ENCODE measurements at regions of chr9 and their contacts with region 1.

Region 1: GRCh38 chr9:73200694-73201452 is 49.2 kb downstream of the ANXA1 start:
- DNase-seq: peak in 1 of 2 experiments; percentile 44
- ATAC-seq: peak; percentile 70 to 84; a peak in 5 of 6 replicates
- H3K4me3 ChIP-seq: no peak overlapping the region
- H3K27ac ChIP-seq: no peak overlapping the region
- H3K4me1 ChIP-seq: peaks cover 22% of the 10 kb centered on the region; the same call in 2 of the 3 replicates
- CTCF ChIP-seq: peak; percentile 83
- EP300 ChIP-seq: no peak
- POLR2A ChIP-seq: no peak
- RAD21 ChIP-seq: peak; percentile 80 to 86

Region 2: DNA sequence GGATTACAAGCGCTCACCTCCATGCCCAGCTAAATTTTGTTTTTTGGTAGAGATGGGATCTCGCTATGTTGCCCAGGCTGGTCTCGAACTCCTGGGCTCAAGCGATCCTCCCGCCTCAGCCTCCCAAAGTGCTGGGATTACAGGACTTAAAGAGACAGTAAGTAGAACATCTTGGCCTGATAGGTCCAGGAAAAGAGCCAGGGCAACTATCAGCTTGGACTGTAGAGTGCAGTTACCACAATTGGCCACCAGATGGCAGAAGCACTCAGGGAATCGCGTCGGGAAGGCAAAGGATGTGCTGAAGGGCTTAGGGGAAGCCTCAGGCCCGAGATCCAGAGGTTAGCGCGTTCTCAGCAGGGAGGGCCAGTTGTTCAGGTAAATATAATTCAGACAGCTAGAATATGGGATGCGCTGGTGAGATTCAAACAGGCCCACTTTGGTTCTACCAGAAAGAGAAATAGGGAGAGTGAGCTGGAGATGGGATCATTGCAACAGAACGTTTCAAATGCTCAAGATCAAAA is 1161.9 kb before region 1 on chr9:
- CTCF ChIA-PET with region 1: interaction called, 13 read pairs
- POLR2A ChIA-PET with region 1: no interaction called
- DNase-seq: peak; percentile 74 to 81
- ATAC-seq: peak; percentile 91 to 96
- H3K4me3 ChIP-seq: no peak overlapping the region
- H3K27ac ChIP-seq: no peak overlapping the region; a peak in 2 of 6 replicates
- H3K4me1 ChIP-seq: peaks cover 7% of the 10 kb centered on the region; the same call in 2 of the 3 replicates
- CTCF ChIP-seq: peak; percentile 90
- EP300 ChIP-seq: no peak
- POLR2A ChIP-seq: no peak
- RAD21 ChIP-seq: peak; percentile 98

Region 3: GRCh38 chr9:73081979-73082657 is 118.8 kb before region 1 on chr9:
- CTCF ChIA-PET with region 1: interaction called, 10 read pairs
- POLR2A ChIA-PET with region 1: no interaction called
- DNase-seq: peak; percentile 49 to 92
- ATAC-seq: peak; percentile 58 to 61; a peak in 5 of 6 replicates
- H3K4me3 ChIP-seq: no peak overlapping the region
- H3K27ac ChIP-seq: peak overlapping the region; percentile 82 to 94
- H3K4me1 ChIP-seq: peaks cover 80% of the 10 kb centered on the region
- CTCF ChIP-seq: peak; percentile 94
- EP300 ChIP-seq: no peak
- POLR2A ChIP-seq: no peak
- RAD21 ChIP-seq: peak; percentile 94 to 95

Region 4: GRCh38 chr9:73162987-73163768 is 37.7 kb before region 1 on chr9:
- CTCF ChIA-PET with region 1: no interaction called
- POLR2A ChIA-PET with region 1: no interaction called
- DNase-seq: no peak
- ATAC-seq: peak; percentile 43 to 55; a peak in 4 of 6 replicates
- H3K4me3 ChIP-seq: no peak overlapping the region
- H3K27ac ChIP-seq: peak overlapping the region in 1 of 2 experiments; percentile 51; a peak in 3 of 6 replicates
- H3K4me1 ChIP-seq: peaks cover 86% of the 10 kb centered on the region
- CTCF ChIP-seq: no peak
- EP300 ChIP-seq: no peak
- POLR2A ChIP-seq: no peak
- RAD21 ChIP-seq: no peak

Region 5: DNA sequence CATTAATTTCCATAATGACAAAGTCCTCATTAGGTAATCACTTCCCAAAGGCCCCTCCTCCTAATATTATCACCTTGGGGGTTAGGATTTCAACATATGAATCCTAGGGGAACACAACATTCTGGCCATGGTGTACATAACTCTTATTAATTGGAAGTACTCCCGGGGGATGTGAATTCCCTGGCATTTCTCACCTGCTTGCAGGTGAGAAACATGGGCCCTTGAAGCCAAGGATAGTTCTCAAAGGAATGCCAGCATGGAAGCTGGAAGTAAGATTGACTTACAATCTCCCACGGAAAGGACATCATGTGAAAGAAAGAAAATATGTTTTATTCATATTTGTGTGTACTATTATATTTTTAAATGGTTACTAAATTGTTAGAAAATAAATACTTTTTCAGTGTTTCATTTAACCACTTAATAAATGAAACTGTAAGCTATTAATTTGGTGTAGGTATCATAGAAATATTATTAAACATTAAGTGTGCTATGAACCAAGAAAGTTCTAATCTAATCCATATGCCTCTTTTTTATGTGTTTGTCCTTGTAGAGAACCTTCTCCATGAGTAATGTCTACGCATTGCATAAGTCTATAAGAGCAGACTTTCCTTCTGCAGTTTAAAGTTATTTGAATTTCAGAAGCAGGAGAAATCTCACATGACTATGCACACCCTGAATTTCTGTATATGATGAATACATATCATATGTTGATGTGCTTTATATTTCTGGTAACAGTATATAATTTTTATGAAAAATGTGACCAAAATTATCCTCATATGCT is 10.2 kb after region 1 on chr9:
- CTCF ChIA-PET with region 1: interaction called, 36 read pairs
- POLR2A ChIA-PET with region 1: no interaction called
- DNase-seq: no peak
- ATAC-seq: no peak
- H3K4me3 ChIP-seq: no peak overlapping the region
- H3K27ac ChIP-seq: no peak overlapping the region
- H3K4me1 ChIP-seq: no peaks in the 10 kb centered on the region
- CTCF ChIP-seq: no peak
- EP300 ChIP-seq: no peak
- POLR2A ChIP-seq: no peak
- RAD21 ChIP-seq: no peak

Region 6: DNA sequence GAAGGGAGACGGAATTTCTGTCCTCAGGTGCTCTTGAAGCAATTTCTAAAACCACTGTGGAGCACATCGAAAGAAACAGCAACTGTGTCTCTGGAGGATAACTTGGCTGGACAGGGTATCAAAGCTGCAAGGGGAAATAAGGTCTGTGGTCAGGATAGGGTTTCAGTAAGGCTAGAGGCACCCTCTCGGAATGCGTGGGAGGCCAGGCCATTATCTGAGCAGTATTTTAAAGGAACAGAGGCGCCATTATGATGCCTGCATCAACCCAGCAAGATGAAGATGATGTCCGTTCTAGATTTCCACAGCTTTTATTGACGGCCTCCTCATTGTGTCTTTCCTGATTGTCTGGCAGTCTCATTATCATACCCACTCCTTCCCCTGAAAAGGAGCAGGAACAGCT is 1372.9 kb after region 1 on chr9:
- CTCF ChIA-PET with region 1: interaction called, 47 read pairs
- POLR2A ChIA-PET with region 1: no interaction called
- DNase-seq: no peak
- ATAC-seq: no peak
- H3K4me3 ChIP-seq: no peak overlapping the region
- H3K27ac ChIP-seq: no peak overlapping the region
- H3K4me1 ChIP-seq: no peaks in the 10 kb centered on the region
- CTCF ChIP-seq: no peak
- EP300 ChIP-seq: no peak
- POLR2A ChIP-seq: no peak
- RAD21 ChIP-seq: no peak

Measured in A549 (cell line).